Adrenal gland (tissue), 19 donors: ENCODE measurements at regions of chr17 and their contacts with region 1.

Region 1: DNA sequence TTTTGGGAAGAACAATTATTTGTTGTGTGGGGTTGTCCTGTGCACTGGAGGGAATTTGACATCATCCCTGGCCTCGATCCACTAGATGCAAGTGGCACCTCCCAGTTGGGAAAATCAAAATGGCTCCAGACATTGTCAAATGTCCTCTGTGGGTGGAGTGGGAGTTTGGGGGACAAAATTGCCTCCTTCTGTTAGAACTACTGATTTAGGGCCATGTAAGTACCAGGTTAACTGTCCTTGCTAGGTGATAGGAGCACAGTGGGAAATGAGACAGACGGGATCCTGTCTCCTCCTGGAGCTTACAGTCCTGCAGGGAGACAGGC is 56.8 kb downstream of the ARHGAP23 start:
- DNase-seq: no peak
- H3K4me3 ChIP-seq: no peak overlapping the region
- H3K27ac ChIP-seq: peak overlapping the region in 1 of 5 donors; percentile 9
- H3K4me1 ChIP-seq: no peaks in the 10 kb centered on the region
- H3K27me3 ChIP-seq: no peaks in the 10 kb centered on the region
- CTCF ChIP-seq: peak in 1 of 6 experiments; percentile 18
- POLR2A ChIP-seq: no peak

Region 2: DNA sequence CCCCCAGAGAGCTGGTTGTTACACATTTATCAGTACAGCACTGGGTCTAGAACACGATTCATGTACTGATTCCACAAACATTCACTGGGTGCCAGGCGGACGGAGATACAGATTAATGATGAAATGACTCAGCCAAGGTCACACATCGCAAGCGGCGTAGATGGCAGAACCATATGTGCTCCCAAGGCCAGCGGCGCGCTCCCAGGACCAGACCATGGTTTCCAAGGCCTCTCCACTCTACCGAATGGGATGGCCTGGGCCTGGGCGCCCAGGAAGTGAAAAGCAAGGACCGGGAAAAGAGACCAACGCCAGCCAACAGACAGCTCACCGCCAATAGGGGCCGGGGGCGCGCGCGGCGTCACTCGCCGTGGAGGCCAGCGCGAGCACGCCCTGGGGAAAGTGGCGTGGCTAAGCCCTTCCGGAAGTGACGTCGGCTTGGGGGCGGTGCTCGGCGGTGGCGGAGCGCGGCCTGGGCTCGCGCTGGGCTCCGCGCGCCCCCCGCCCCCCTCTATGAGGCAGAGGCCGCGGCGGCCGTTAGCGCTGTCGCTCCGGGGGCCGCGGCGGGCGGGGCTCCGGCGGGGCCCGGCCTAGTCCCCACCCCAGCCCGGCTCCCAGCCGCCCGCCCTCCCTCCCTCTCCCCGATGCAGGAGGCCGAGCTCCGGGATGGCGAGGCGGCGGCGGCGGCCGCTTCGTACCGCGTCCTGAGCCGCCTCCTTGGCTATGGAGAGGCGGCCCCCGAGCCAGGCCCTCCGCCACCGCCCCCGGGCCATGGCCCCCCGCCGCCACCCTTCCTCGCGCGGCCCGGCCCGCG is 133.5 kb before region 1 on chr17 and contains the start of gene SOCS7:
- intact Hi-C with region 1: loop called in 1 of 2 experiments (anchors 10 kb)
- DNase-seq: peak; percentile 92 to 96 (median 94)
- H3K4me3 ChIP-seq: peak within 1 kb of the TSS; percentile 21 to 92 (median 57)
- H3K27ac ChIP-seq: peak within 1 kb of the TSS in 4 of 5 donors; percentile 61 to 92 (median 90)
- H3K4me1 ChIP-seq: peaks cover 7 to 42% of the 10 kb centered on the region in 2 donors
- H3K27me3 ChIP-seq: no peaks in the 10 kb centered on the region
- CTCF ChIP-seq: no peak
- POLR2A ChIP-seq: peak; percentile 36 to 67
- total RNA-seq, gene SOCS7: 17.2 to 51.3 (median 20.6) TPM

Region 3: DNA sequence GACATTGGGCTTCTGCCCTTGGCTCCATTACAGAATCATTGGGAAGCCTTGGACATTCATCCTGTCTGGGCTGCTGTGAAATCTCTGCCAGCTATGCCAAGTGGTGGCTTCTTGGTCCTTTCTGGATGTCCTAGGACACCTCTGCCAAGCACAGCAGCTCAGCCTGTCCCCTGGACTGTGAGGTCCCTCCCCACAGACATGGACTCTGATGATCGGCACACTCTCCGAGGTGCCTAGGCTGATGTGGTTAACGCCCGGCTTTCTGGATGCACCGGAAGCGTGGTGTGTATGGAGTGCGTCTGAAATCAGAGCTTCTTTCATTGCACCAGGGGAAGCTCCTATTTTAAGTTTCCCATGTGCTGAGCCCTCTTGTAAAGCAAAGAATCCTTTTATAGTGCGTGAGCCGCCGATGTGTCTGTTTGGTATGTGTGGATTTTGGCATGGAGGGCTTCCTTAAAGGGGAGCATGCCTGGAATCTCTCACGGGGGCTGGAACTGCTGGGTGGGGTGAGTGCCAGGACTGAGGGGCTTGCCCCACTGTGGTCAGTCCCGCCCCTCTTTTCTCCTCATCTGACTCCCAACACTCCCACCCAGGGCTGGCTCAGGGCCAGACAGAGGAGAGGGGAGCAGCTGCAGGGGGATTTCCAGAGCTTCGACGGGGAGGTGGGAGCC is 63.8 kb before region 1 on chr17:
- intact Hi-C with region 1: loop called (anchors 5 to 10 kb)
- DNase-seq: no peak
- H3K4me3 ChIP-seq: no peak overlapping the region
- H3K27ac ChIP-seq: no peak overlapping the region
- H3K4me1 ChIP-seq: peaks cover 8 to 16% of the 10 kb centered on the region in 2 donors
- H3K27me3 ChIP-seq: peaks cover 4% of the 10 kb centered on the region
- CTCF ChIP-seq: no peak
- POLR2A ChIP-seq: no peak

Region 4: DNA sequence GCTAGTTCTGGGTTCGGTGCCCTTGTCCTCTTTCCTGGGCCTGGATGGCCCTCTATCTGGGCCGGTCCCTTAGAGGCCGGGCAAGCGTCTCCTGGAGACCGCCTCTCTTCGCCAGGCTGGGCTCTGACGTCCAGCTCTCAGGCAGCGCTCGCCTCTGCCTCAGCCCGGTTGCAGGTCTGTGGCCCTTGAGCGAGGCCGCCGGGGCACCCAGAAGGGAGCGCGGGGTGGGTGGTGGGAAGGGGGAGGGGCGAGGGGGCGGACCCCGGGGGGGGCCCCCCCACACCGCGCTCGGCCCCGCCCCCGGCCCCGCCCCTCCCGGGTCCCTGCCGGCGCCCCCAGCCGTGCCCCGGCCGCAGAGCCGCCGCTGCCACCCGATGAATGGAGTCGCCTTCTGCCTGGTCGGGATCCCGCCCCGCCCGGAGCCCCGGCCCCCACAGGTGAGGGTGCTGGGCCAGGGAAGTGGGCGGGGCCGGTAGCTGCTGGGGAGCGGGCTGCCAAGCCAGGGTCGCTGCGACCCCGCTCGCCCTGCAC is 56.9 kb before region 1 on chr17 and contains the start of gene ARHGAP23:
- intact Hi-C with region 1: loop called (anchors 5 to 10 kb)
- DNase-seq: peak; percentile 85 to 93 (median 90)
- H3K4me3 ChIP-seq: peak within 1 kb of the TSS; percentile 80 to 92 (median 88)
- H3K27ac ChIP-seq: peak within 1 kb of the TSS; percentile 74 to 95 (median 91)
- H3K4me1 ChIP-seq: peaks cover 32 to 52% of the 10 kb centered on the region in 2 donors
- H3K27me3 ChIP-seq: no peaks in the 10 kb centered on the region
- CTCF ChIP-seq: no peak
- POLR2A ChIP-seq: peak in 1 of 2 donors; percentile 63
- total RNA-seq, gene ARHGAP23: 4.4 to 71.9 (median 29.2) TPM

Region 5: DNA sequence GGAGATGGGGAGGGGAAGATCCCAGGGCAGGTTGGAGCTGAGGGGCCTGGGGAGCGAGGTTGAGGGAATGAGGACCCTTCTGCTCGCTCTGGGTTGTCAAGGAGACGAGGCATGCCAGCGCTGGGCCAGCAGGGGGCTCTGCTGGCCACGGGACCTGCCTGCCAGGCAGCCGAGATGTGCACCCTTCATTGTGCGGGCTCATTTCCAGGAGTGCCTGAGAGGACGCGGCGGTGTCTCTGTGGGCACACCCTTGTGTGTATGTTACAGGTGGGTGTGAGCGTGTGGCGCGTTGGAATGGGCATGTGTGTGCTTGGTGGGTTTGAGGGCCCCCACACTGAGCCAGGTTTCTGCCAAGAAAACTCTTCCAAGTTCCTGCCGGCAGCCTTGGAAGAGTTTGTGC is 41.0 kb before region 1 on chr17:
- intact Hi-C with region 1: loop called (anchors 5 kb)
- DNase-seq: peak; percentile 63 to 90 (median 81)
- H3K4me3 ChIP-seq: no peak overlapping the region
- H3K27ac ChIP-seq: no peak overlapping the region
- H3K4me1 ChIP-seq: peaks cover 12 to 33% of the 10 kb centered on the region in 2 donors
- H3K27me3 ChIP-seq: no peaks in the 10 kb centered on the region
- CTCF ChIP-seq: peak; percentile 69 to 95 (median 92)
- POLR2A ChIP-seq: no peak

Region 6: DNA sequence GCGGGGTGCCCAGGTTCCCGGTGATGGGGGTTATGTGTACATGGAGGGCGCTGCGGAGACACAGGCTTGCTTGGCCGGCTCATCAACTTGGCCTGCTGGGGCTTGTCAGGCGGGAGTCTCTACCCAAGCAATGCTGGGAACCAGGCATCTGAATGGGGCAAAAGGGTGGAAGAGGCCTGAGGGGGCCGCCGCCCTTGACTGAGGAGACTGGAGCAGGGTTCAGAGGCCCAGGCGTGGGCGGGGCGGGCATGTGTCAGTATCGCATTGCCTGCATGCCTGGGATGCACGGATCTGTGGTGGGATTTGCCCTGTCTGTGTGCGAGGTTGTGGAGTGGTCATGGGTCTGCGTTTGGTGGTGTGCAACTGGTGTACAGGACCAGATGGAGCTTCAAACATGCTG is 35.7 kb before region 1 on chr17:
- intact Hi-C with region 1: loop called (anchors 5 kb)
- DNase-seq: no peak
- H3K4me3 ChIP-seq: no peak overlapping the region
- H3K27ac ChIP-seq: peak overlapping the region in 2 of 5 donors; percentile 13 to 55
- H3K4me1 ChIP-seq: peaks cover 5 to 32% of the 10 kb centered on the region in 2 donors
- H3K27me3 ChIP-seq: no peaks in the 10 kb centered on the region
- CTCF ChIP-seq: no peak
- POLR2A ChIP-seq: no peak

Region 7: GRCh38 chr17:38584350-38584925 is 99.3 kb after region 1 on chr17:
- intact Hi-C with region 1: loop called in 1 of 2 experiments (anchors 5 kb)
- DNase-seq: peak; percentile 58 to 81 (median 65)
- H3K4me3 ChIP-seq: no peak overlapping the region
- H3K27ac ChIP-seq: peak overlapping the region in 1 of 5 donors; percentile 65
- H3K4me1 ChIP-seq: no peaks in the 10 kb centered on the region
- H3K27me3 ChIP-seq: peaks cover 24% of the 10 kb centered on the region
- CTCF ChIP-seq: peak; percentile 86 to 98 (median 90)
- POLR2A ChIP-seq: no peak

Region 8: DNA sequence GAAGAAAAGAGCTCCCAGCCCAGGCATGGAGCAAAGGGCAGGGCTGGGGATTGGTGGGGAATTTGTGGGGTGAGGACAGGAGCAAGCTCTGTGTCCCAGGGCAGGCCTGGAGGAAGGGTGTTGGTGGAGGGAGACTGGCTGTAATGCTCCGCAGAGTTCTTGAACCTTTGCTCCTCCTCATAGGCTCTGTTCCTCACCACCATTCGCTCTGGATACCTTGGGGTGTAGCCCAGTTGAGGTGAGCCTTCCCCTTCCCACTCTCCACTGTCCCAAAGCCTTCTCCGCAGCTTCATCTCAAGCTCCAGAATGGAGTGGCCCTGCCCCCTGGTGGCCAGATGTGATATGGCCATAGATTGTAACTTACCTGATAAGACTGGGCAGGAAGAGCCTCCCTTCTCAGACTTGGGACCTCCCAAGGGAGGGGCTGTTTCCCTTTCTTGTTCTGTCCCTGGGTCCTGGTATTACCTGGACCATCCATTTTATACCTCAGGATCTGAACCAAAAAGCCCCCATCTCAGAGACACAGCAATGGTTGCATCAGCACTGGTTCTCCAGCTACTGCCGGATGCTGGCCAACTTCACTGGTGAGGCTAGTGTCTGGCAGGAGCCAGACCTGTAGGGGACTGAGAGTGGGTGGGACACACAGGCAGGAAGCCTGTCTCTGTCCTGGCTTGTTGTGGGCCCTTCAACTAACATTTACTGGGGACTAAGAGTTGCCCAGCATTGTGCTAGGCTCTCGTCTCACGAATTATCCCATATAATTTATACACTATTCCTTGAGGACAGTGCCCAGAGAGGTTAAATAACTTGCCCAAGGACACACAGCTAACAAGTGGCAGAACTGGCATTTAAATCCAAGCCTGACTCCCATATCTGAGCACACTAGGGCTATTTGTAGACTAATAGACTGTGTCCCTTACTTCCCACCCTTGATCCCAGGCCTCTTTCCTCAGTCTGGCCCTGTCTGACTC is 759.8 kb after region 1 on chr17:
- intact Hi-C with region 1: no loop called
- DNase-seq: peak; percentile 80 to 96 (median 90)
- H3K4me3 ChIP-seq: no peak overlapping the region
- H3K27ac ChIP-seq: no peak overlapping the region
- H3K4me1 ChIP-seq: no peaks in the 10 kb centered on the region
- H3K27me3 ChIP-seq: no peaks in the 10 kb centered on the region
- CTCF ChIP-seq: peak; percentile 87 to 98 (median 93)
- POLR2A ChIP-seq: no peak